ENCODE measurements at regions of chr21 and their contacts with region 1.

Region 1: GRCh38 chr21:28871388-28872010 is 121.2 kb downstream of the LTN1 start:
- DNase-seq: no peak
- H3K4me3 ChIP-seq: no peak overlapping the region
- H3K27ac ChIP-seq: no peak overlapping the region
- H3K4me1 ChIP-seq: no peaks in the 10 kb centered on the region
- CTCF ChIP-seq: no peak

Region 2: GRCh38 chr21:28884976-28885852 is 13.7 kb after region 1 on chr21:
- CTCF ChIA-PET with region 1: no interaction called
- POLR2A ChIA-PET with region 1: interaction called, 15 read pairs
- intact Hi-C with region 1: no loop called
- DNase-seq: peak; percentile 84
- H3K4me3 ChIP-seq: peak overlapping the region; percentile 67
- H3K27ac ChIP-seq: peak overlapping the region; percentile 62
- H3K4me1 ChIP-seq: peaks cover 11% of the 10 kb centered on the region
- CTCF ChIP-seq: no peak